Caco-2 (cell line): ENCODE measurements at regions of chr12 and their contacts with region 1.

Region 1: GRCh38 chr12:31659087-31659933 is at the start of gene ETFBKMT:
- DNase-seq: peak; percentile 99
- H3K4me3 ChIP-seq: peak within 1 kb of the TSS; percentile 73
- H3K4me3 Mint-ChIP-seq: peak within 1 kb of the TSS; percentile 78
- H3K27ac Mint-ChIP-seq: peak within 1 kb of the TSS; percentile 80
- H3K4me1 ChIP-seq: peaks cover 4% of the 10 kb centered on the region; the same call in 1 of the 2 replicates
- H3K4me1 Mint-ChIP-seq: peaks cover 28% of the 10 kb centered on the region
- H3K27me3 ChIP-seq: no peaks in the 10 kb centered on the region
- H3K27me3 Mint-ChIP-seq: no peaks in the 10 kb centered on the region
- CTCF ChIP-seq: peak; percentile 51 to 74
- total RNA-seq, gene ETFBKMT: 1.6 and 2.1 TPM in 2 replicates

Region 2: GRCh38 chr12:31444736-31445135 is 214.6 kb before region 1 on chr12:
- CTCF ChIA-PET with region 1: no interaction called
- POLR2A ChIA-PET with region 1: no interaction called
- intact Hi-C with region 1: no loop called
- DNase-seq: no peak
- H3K4me3 ChIP-seq: no peak overlapping the region
- H3K4me3 Mint-ChIP-seq: no peak overlapping the region
- H3K27ac Mint-ChIP-seq: no peak overlapping the region
- H3K4me1 ChIP-seq: no peaks in the 10 kb centered on the region
- H3K4me1 Mint-ChIP-seq: no peaks in the 10 kb centered on the region
- H3K27me3 ChIP-seq: no peaks in the 10 kb centered on the region
- H3K27me3 Mint-ChIP-seq: no peaks in the 10 kb centered on the region
- CTCF ChIP-seq: no peak

Region 3: GRCh38 chr12:31728917-31729640 is 69.8 kb after region 1 on chr12 and contains the start of gene AMN1:
- CTCF ChIA-PET with region 1: interaction called, 6 read pairs
- POLR2A ChIA-PET with region 1: interaction called, 5 read pairs
- intact Hi-C with region 1: loop called (anchors 2 kb)
- DNase-seq: peak; percentile 100
- H3K4me3 ChIP-seq: peak within 1 kb of the TSS; percentile 78
- H3K4me3 Mint-ChIP-seq: peak within 1 kb of the TSS; percentile 95
- H3K27ac Mint-ChIP-seq: peak within 1 kb of the TSS; percentile 98
- H3K4me1 ChIP-seq: peaks cover 35% of the 10 kb centered on the region
- H3K4me1 Mint-ChIP-seq: peaks cover 21% of the 10 kb centered on the region
- H3K27me3 ChIP-seq: no peaks in the 10 kb centered on the region
- H3K27me3 Mint-ChIP-seq: no peaks in the 10 kb centered on the region
- CTCF ChIP-seq: no peak
- total RNA-seq, gene AMN1: 6.2 and 8.8 TPM in 2 replicates

Region 4: DNA sequence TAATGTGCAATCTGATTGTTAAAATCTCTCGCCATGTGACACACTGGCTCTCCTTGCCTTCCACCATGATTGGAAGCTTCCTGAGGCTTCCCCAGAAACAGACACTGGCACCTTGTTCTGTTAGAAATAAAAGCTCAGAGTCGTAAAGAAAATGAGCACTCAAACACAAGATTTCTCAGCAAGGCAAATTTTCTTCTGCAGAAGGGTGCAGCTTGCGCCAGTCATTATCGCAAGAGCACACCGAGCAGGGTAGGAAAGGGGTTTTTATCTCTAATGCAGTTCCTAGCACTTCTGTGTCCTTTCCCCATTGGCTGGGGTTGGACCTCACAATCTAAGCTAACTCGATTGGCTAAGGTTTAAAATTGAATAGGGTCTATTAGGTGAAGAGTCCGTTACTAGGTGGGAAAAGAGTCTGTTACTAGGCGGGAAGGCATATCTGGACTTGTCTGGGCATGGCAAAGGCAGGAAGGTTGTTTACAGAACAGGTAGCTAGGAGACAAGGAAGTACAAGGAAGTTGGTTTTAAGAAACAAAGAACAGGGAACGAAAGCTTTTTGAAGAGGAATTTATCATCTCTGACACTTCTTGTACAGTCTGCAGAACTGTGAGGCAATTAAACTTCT is 384.7 kb after region 1 on chr12:
- CTCF ChIA-PET with region 1: no interaction called
- POLR2A ChIA-PET with region 1: no interaction called
- intact Hi-C with region 1: loop called (anchors 5 kb)
- DNase-seq: no peak
- H3K4me3 ChIP-seq: no peak overlapping the region
- H3K4me3 Mint-ChIP-seq: no peak overlapping the region
- H3K27ac Mint-ChIP-seq: no peak overlapping the region
- H3K4me1 ChIP-seq: peaks cover 23% of the 10 kb centered on the region
- H3K4me1 Mint-ChIP-seq: peaks cover 7% of the 10 kb centered on the region
- H3K27me3 ChIP-seq: no peaks in the 10 kb centered on the region
- H3K27me3 Mint-ChIP-seq: no peaks in the 10 kb centered on the region
- CTCF ChIP-seq: no peak

Region 5: GRCh38 chr12:32139064-32139421 is 479.7 kb after region 1 on chr12:
- CTCF ChIA-PET with region 1: no interaction called
- POLR2A ChIA-PET with region 1: no interaction called
- intact Hi-C with region 1: no loop called
- DNase-seq: no peak
- H3K4me3 ChIP-seq: no peak overlapping the region
- H3K4me3 Mint-ChIP-seq: no peak overlapping the region
- H3K27ac Mint-ChIP-seq: no peak overlapping the region
- H3K4me1 ChIP-seq: 0 out of 2 replicates have a peak, but pooled peaks cover 5% of the 10 kb centered on the region
- H3K4me1 Mint-ChIP-seq: peaks cover 7% of the 10 kb centered on the region
- H3K27me3 ChIP-seq: no peaks in the 10 kb centered on the region
- H3K27me3 Mint-ChIP-seq: no peaks in the 10 kb centered on the region
- CTCF ChIP-seq: no peak

Region 6: GRCh38 chr12:32444895-32445294 is 785.6 kb after region 1 on chr12:
- CTCF ChIA-PET with region 1: no interaction called
- POLR2A ChIA-PET with region 1: interaction called, 7 read pairs
- intact Hi-C with region 1: loop called (anchors 10 kb)
- DNase-seq: peak; percentile 66 to 68
- H3K4me3 ChIP-seq: no peak overlapping the region
- H3K4me3 Mint-ChIP-seq: peak overlapping the region; percentile 57
- H3K27ac Mint-ChIP-seq: peak overlapping the region; percentile 94
- H3K4me1 ChIP-seq: peaks cover 59% of the 10 kb centered on the region
- H3K4me1 Mint-ChIP-seq: peaks cover 68% of the 10 kb centered on the region
- H3K27me3 ChIP-seq: no peaks in the 10 kb centered on the region
- H3K27me3 Mint-ChIP-seq: no peaks in the 10 kb centered on the region
- CTCF ChIP-seq: no peak

Region 7: DNA sequence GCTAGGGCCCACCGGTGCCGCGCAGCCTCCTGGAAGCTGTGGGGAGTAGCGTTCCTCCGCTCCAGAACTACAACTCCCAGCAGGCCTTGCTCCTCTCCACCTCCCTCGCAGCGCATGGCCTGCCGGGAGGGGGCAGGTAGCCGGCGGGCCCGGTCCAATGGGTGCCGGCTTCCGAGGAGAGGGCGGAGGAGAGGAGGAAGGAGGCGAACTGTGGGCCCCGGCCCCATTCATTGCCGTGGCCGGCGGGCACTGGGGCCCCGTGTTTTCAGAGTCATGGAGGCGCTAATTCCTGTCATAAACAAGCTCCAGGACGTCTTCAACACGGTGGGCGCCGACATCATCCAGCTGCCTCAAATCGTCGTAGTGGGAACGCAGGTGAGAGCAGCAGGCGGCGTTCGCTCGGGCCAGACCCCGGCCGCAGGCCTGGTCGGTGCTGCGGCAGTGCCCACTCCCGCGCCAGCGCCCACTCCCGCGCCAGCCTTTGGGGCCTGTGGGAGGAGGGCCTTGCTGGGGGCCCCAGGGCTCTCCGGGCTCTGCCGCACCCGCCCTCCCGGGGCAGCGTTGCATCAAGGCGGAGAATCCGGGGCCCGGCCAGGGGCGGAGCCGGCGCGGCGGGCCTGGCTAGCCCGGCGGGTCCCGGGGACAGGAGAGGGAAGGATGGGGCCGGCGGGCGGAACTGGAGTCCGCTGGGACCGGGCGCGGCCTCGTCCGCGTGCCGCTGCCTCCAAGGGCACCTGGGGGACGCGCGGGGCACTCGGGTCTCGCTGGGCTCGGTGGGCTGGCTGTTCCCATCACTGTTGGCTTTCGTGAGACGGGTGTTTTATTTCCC is 1020.0 kb after region 1 on chr12 and contains the start of gene DNM1L:
- CTCF ChIA-PET with region 1: no interaction called
- POLR2A ChIA-PET with region 1: no interaction called
- intact Hi-C with region 1: loop called (anchors 5 kb)
- DNase-seq: peak; percentile 99
- H3K4me3 ChIP-seq: peak within 1 kb of the TSS; percentile 86
- H3K4me3 Mint-ChIP-seq: peak within 1 kb of the TSS; percentile 97
- H3K27ac Mint-ChIP-seq: peak within 1 kb of the TSS; percentile 95
- H3K4me1 ChIP-seq: peaks cover 22% of the 10 kb centered on the region
- H3K4me1 Mint-ChIP-seq: peaks cover 19% of the 10 kb centered on the region
- H3K27me3 ChIP-seq: no peaks in the 10 kb centered on the region
- H3K27me3 Mint-ChIP-seq: no peaks in the 10 kb centered on the region
- CTCF ChIP-seq: peak in 1 of 2 experiments; percentile 18
- total RNA-seq, gene DNM1L: 136 and 137 TPM in 2 replicates